ENCODE measurements at regions of chr6 and their contacts with region 1.

Region 1: DNA sequence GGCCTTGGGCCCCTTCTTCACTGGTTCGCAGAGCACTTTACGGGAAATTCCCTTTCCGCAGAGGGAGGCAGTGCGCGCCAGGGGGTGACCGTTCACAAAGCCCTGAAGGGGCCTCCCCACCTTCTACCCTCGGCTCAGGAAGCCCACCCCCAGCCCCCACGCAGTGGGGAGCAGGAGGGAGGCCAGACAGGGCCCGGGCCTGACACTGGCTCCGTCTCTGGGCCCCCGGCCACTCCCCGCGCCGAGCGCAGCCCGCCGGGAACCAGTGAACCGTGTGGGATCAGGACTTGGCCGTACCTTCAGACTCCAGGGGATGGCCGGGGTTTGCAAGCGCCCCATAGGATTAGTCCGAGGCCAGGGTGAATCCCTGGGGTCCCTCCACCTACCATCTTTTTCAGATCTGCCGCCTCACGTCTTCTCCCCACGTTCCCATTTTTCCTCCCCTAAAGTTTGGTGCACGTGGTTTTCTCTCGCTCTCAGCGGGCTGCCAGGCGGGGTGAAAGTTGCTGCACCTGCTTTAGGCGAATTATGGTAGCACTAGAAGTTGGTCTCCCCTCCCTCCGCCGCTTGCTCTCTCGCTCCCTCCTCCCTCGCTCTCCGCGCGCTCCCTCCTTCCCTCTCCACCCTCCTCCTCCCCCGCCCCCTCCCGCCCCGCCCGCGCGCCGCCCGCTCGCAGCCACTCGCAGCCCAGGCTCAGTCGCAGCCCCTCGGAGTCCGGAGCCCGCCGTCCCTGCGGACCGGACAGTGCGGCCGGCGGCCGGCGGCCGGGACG is at the start of gene FOXP4:
- DNase-seq: peak; percentile 76
- ATAC-seq: peak; percentile 77
- H3K4me3 Mint-ChIP-seq: peak within 1 kb of the TSS; percentile 97
- H3K27ac Mint-ChIP-seq: peak within 1 kb of the TSS; percentile 91
- H3K4me1 Mint-ChIP-seq: peaks cover 43% of the 10 kb centered on the region
- H3K27me3 Mint-ChIP-seq: no peaks in the 10 kb centered on the region
- CTCF ChIP-seq: no peak
- total RNA-seq, gene FOXP4: 37.8 and 40.7 TPM in 2 replicates

Region 2: GRCh38 chr6:41367700-41368099 is 178.2 kb before region 1 on chr6:
- CTCF ChIA-PET with region 1: no interaction called
- POLR2A ChIA-PET with region 1: no interaction called
- intact Hi-C with region 1: loop called (anchors 1 kb)
- DNase-seq: no peak
- ATAC-seq: no peak
- H3K4me3 Mint-ChIP-seq: no peak overlapping the region
- H3K27ac Mint-ChIP-seq: no peak overlapping the region
- H3K4me1 Mint-ChIP-seq: peaks cover 19% of the 10 kb centered on the region
- H3K27me3 Mint-ChIP-seq: peaks cover 55% of the 10 kb centered on the region
- CTCF ChIP-seq: no peak

Region 3: GRCh38 chr6:41442800-41443501 is 102.9 kb before region 1 on chr6:
- CTCF ChIA-PET with region 1: no interaction called
- POLR2A ChIA-PET with region 1: no interaction called
- intact Hi-C with region 1: loop called (anchors 5 kb)
- DNase-seq: peak; percentile 22
- ATAC-seq: no peak
- H3K4me3 Mint-ChIP-seq: no peak overlapping the region
- H3K27ac Mint-ChIP-seq: no peak overlapping the region
- H3K4me1 Mint-ChIP-seq: peaks cover 42% of the 10 kb centered on the region
- H3K27me3 Mint-ChIP-seq: peaks cover 10% of the 10 kb centered on the region
- CTCF ChIP-seq: peak; percentile 13

Region 4: DNA sequence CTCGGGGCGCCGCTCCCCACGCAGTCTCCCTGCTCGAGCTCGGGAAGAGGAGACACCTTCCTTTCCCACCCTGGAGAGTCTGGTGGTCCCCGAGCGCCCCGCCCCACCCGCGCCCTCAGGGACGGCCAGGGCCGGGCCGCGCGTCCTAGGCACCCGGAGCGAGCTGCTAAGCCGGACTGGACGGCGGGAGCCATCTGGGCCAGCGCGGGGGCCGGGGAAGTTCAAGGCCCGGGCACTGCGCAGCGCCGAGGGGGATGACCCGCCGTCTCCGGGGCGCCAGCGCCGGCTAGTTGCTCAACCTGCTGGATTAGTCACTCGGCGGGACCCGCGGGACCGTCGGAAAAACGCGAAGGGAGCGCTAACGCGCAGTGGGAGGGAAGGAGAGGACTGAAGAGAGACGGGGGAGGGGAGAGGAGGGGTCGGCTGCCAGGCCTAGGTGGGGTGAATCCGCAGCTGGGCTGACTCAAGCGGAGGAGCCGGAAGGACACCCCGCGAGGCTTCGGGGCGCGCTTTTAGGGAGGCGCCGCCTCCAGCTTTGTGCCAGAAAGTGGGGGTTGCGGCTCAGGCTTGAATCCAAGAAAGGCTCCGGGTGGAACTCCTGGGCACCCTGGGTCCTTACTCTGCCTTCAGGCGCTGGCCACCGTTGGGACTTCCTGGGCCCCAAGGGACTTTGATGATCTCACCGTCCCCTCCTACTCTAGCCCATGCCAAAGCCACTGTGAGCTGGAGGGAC is 75.4 kb before region 1 on chr6:
- CTCF ChIA-PET with region 1: no interaction called
- POLR2A ChIA-PET with region 1: no interaction called
- intact Hi-C with region 1: loop called (anchors 2 kb)
- DNase-seq: no peak
- ATAC-seq: peak; percentile 45
- H3K4me3 Mint-ChIP-seq: peak overlapping the region; percentile 66
- H3K27ac Mint-ChIP-seq: no peak overlapping the region
- H3K4me1 Mint-ChIP-seq: peaks cover 20% of the 10 kb centered on the region
- H3K27me3 Mint-ChIP-seq: peaks cover 54% of the 10 kb centered on the region
- CTCF ChIP-seq: no peak

Region 5: GRCh38 chr6:41531591-41532582 is 14.0 kb before region 1 on chr6:
- CTCF ChIA-PET with region 1: interaction called, 5 read pairs
- POLR2A ChIA-PET with region 1: interaction called, 45 read pairs
- intact Hi-C with region 1: loop called (anchors 1 kb)
- DNase-seq: peak; percentile 64
- ATAC-seq: peak; percentile 81
- H3K4me3 Mint-ChIP-seq: peak overlapping the region; percentile 83
- H3K27ac Mint-ChIP-seq: peak overlapping the region; percentile 95
- H3K4me1 Mint-ChIP-seq: peaks cover 73% of the 10 kb centered on the region
- H3K27me3 Mint-ChIP-seq: no peaks in the 10 kb centered on the region
- CTCF ChIP-seq: no peak

Region 6: DNA sequence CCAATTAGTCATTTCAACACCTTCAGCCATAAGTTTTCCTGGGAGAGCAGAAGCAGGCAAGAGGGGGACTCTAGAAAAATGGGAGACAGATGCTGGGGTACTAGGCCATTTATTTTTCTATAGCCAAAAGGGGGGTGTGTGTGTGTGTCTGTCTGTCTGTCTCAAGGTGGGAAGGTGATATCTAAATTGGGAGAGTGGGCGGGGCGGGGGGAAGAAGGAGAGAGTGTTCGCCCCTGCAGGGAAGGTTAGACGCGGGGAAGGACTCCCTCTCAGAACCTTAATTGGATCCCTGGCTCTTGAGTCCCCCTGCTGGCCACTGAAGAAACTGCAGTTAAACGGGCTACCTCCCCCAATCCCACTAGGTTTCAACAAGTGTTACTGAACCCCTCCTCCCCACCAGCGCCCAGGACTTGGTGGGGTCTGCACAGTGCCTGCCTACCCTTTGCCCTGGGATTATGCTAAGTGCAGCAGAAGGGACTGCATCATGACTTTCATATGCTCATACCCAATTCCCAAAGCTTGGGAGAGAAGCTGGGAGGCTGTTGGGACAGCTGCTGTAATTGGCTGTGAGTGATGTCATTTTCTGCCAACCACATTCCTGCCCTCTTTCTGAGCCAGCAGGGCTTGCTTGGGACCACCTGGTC is 46.1 kb after region 1 on chr6:
- CTCF ChIA-PET with region 1: no interaction called
- POLR2A ChIA-PET with region 1: interaction called, 3 read pairs
- intact Hi-C with region 1: loop called (anchors 1 kb)
- DNase-seq: peak; percentile 73
- ATAC-seq: peak; percentile 85
- H3K4me3 Mint-ChIP-seq: no peak overlapping the region
- H3K27ac Mint-ChIP-seq: no peak overlapping the region
- H3K4me1 Mint-ChIP-seq: peaks cover 4% of the 10 kb centered on the region
- H3K27me3 Mint-ChIP-seq: no peaks in the 10 kb centered on the region
- CTCF ChIP-seq: peak; percentile 19